ENCODE measurements at regions of chr9 and their contacts with region 1.

Region 1: GRCh38 chr9:97900738-97901565 is 21.3 kb downstream of the TRMO start:
- DNase-seq: peak; percentile 31
- ATAC-seq: peak; percentile 47 to 49

Region 2: GRCh38 chr9:97710356-97711222 is 190.4 kb before region 1 on chr9:
- intact Hi-C with region 1: loop called (anchors 1 to 2 kb)
- DNase-seq: peak; percentile 44
- ATAC-seq: peak; percentile 86 to 89

Region 3: DNA sequence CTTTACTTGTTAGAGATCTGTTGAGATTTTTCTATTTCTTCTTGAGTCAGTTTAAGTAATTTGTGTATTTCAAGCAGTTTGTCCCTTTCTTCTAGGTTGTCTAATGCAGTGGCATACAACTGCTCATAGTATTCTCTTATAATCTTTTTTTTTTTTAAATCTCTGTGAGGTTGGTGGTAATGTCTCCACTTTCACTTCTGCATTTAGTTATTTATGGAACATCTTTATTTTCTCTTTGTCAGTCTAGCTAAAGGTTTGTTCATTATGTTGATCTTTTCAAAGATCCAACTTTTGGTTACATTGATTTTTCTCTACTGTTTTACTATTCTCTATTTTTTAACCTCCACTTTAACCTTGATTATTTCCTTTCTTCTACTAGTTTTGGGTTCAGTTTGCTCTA is 34.1 kb before region 1 on chr9:
- intact Hi-C with region 1: no loop called
- DNase-seq: no peak
- ATAC-seq: no peak

Region 4: GRCh38 chr9:97958812-97959511 is 58.0 kb after region 1 on chr9:
- intact Hi-C with region 1: no loop called
- DNase-seq: no peak
- ATAC-seq: no peak